ENCODE measurements at regions of chr2 and their contacts with region 1.

Region 1: GRCh38 chr2:68467077-68467960 is at the starts of genes APLF and FBXO48:
- DNase-seq: peak; percentile 90 to 99 (median 98)
- ATAC-seq: peak; percentile 90 to 92
- H3K4me3 Mint-ChIP-seq: peak within 1 kb of the TSS; percentile 87 to 98 (median 96)
- H3K27ac Mint-ChIP-seq: peak within 1 kb of the TSS; percentile 85 to 98 (median 94)
- H3K4me1 Mint-ChIP-seq: peaks cover 12 to 53% (median 41%) of the 10 kb centered on the region in 4 donors
- H3K27me3 Mint-ChIP-seq: no peaks in the 10 kb centered on the region
- polyA plus RNA-seq, gene APLF: 1.4 to 1.6 (median 1.6) TPM
- polyA plus RNA-seq, gene FBXO48: 0.19 to 0.69 (median 0.36) TPM

Region 2: DNA sequence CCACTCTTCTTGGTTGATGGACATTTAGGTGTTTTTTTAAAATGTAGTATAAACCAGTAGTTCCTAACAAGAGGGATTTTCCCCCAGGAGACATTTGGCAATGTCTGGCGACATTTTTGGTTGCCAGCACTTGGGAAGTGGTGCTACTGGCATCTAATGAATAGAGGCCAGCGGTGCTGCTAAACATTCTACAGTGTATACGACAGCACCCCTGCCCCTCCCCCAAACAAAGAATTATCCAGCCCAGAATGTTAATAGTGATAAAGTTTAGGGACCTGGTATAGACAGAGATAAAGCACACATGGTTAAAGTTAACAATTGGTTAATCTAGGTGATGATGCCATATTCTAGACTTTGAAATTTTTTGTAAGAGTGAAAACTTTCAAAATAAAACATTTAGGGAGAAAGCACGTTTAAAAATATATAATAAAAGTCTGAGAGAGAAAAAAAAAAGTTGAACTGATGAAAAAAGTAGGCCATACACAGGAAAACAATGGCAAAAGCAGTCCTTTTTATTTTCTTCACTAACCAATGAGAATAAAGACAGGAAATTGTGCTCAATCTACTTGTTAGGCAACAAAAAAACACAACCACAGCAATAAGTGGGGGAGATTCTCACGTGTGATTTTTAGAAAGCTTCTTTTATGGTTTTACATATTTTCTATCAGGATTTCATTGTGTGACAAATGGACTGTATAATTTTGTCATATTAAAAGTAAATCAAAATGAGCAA is 15.0 kb before region 1 on chr2:
- POLR2A ChIA-PET with region 1: interaction called, 19 read pairs
- DNase-seq: peak in 3 of 10 donors; percentile 43 to 72 (median 71)
- ATAC-seq: peak; percentile 53 to 75
- H3K4me3 Mint-ChIP-seq: peak overlapping the region in 5 of 10 donors; percentile 19 to 75 (median 39)
- H3K27ac Mint-ChIP-seq: peak overlapping the region in 8 of 10 donors; percentile 2 to 86 (median 36)
- H3K4me1 Mint-ChIP-seq: peaks cover 7 to 20% (median 18%) of the 10 kb centered on the region in 4 donors
- H3K27me3 Mint-ChIP-seq: no peaks in the 10 kb centered on the region

Region 3: DNA sequence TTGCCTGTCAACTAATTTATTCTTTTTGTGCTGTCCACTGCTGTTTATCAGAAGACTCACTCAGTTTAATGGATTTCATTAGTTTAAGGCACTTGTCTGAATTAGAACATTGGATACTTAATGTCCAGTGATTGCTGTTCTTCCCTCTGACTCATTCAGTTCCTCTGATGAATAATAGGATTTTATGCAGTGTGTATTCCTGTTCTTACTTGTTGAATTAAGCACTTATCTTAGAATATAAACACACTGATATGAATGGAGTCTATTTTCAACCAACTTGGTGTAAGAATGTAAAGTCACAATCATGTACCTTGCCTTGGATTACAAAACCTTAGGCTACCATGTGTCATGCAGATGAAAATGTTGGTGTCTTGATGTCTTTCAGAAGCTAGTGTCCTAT is 89.1 kb after region 1 on chr2:
- POLR2A ChIA-PET with region 1: no interaction called
- DNase-seq: no peak
- ATAC-seq: no peak
- H3K4me3 Mint-ChIP-seq: no peak overlapping the region
- H3K27ac Mint-ChIP-seq: no peak overlapping the region
- H3K4me1 Mint-ChIP-seq: no peaks in the 10 kb centered on the region
- H3K27me3 Mint-ChIP-seq: no peaks in the 10 kb centered on the region

Region 4: GRCh38 chr2:68908392-68908970 is 441.2 kb after region 1 on chr2:
- POLR2A ChIA-PET with region 1: interaction called, 12 read pairs
- DNase-seq: peak; percentile 41 to 88 (median 71)
- ATAC-seq: peak; percentile 97 to 98
- H3K4me3 Mint-ChIP-seq: peak overlapping the region; percentile 17 to 66 (median 51)
- H3K27ac Mint-ChIP-seq: peak overlapping the region; percentile 1 to 92 (median 71)
- H3K4me1 Mint-ChIP-seq: peaks cover 20 to 37% (median 29%) of the 10 kb centered on the region in 4 donors
- H3K27me3 Mint-ChIP-seq: no peaks in the 10 kb centered on the region